ENCODE measurements at regions of chr2 and their contacts with region 1.

Region 1: DNA sequence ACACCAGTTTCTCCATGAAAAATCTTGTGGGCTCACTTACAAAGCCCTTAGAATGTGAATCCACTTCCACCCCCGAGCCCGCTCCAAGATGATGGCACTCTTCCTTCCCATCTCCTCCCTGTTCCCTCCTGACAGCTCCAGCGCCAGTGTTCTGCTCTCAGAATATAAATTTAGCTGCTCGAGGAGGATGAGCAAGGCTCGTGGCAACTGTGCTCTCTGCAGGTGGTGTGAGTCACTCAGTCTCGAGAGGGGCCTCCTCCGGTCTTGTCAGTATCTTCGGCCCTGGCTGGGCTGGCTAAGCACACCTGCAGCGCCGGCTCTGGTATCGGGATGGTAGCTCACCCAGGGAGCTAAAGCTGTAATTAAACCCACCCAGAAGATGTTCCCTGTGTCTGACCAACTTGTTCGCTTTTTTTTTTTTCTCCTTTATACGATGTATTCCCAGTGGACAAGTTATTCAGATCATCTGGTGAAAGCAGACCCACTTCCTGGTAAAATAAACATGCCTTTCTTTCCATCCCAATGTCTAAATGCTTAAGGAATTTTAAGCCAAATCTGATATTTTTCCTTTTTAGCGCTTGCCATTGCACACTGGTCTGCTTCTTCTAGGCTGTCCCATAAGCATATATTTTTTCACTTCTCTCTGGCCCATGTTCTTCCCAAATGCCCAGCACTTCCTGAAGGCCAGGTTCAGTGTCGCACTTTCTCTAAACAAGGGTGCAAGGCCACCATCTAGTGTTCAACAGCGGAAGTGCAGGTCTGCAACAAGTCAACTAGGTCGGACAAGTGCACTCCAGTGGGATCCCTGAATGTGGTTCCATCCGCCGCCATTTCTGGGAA is 31.4 kb upstream of the YPEL5 start:
- DNase-seq: peak; percentile 68
- H3K4me3 ChIP-seq: no peak overlapping the region
- H3K27ac ChIP-seq: no peak overlapping the region
- H3K4me1 ChIP-seq: peaks cover 2% of the 10 kb centered on the region
- H3K27me3 ChIP-seq: peaks cover 0 to 2% of the 10 kb centered on the region in 2 experiments
- CTCF ChIP-seq: peak; percentile 80 to 84
- POLR2A ChIP-seq: no peak

Region 2: GRCh38 chr2:28958689-28959088 is 1156.7 kb before region 1 on chr2:
- CTCF ChIA-PET with region 1: interaction called, 5 read pairs
- POLR2A ChIA-PET with region 1: no interaction called
- dilution Hi-C with region 1: no loop called
- intact Hi-C with region 1: loop called (anchors 1 kb)
- DNase-seq: peak; percentile 66
- H3K4me3 ChIP-seq: no peak overlapping the region
- H3K27ac ChIP-seq: no peak overlapping the region
- H3K4me1 ChIP-seq: peaks cover 7% of the 10 kb centered on the region
- H3K27me3 ChIP-seq: no peaks in the 10 kb centered on the region
- CTCF ChIP-seq: peak; percentile 38 to 58
- POLR2A ChIP-seq: no peak

Region 3: GRCh38 chr2:29923110-29923721 is 192.1 kb before region 1 on chr2:
- CTCF ChIA-PET with region 1: interaction called, 20 read pairs
- POLR2A ChIA-PET with region 1: no interaction called
- dilution Hi-C with region 1: no loop called
- intact Hi-C with region 1: no loop called
- DNase-seq: peak; percentile 33
- H3K4me3 ChIP-seq: no peak overlapping the region
- H3K27ac ChIP-seq: no peak overlapping the region
- H3K4me1 ChIP-seq: no peaks in the 10 kb centered on the region
- H3K27me3 ChIP-seq: peaks cover 20 to 21% of the 10 kb centered on the region in 2 experiments
- CTCF ChIP-seq: peak; percentile 78 to 79
- POLR2A ChIP-seq: no peak

Region 4: DNA sequence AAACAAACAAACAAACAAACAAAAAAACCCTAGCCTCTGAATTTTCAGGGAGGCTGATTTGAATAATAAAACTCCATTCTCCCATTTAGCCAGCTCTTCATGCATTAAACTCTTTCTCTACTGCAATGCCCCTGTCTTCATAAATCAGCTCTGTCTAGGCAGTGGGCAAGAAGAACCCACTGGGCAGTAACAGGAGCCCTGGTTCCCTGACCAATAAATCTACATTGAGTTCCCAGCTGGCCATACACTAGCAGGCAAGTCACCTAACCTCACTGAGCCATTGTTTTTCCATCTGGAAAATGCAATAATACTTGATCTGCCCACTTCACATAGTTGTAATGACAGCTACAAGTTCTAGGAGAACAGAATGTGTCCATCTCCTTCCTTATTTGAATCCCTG is 26.2 kb before region 1 on chr2:
- CTCF ChIA-PET with region 1: interaction called, 78 read pairs
- POLR2A ChIA-PET with region 1: interaction called, 7 read pairs
- dilution Hi-C with region 1: no loop called
- intact Hi-C with region 1: loop called (anchors 1 kb)
- DNase-seq: no peak
- H3K4me3 ChIP-seq: no peak overlapping the region
- H3K27ac ChIP-seq: no peak overlapping the region
- H3K4me1 ChIP-seq: no peaks in the 10 kb centered on the region
- H3K27me3 ChIP-seq: no peaks in the 10 kb centered on the region
- CTCF ChIP-seq: no peak
- POLR2A ChIP-seq: no peak

Region 5: GRCh38 chr2:30098266-30099005 is 16.9 kb before region 1 on chr2:
- CTCF ChIA-PET with region 1: interaction called, 30 read pairs
- POLR2A ChIA-PET with region 1: no interaction called
- dilution Hi-C with region 1: no loop called
- intact Hi-C with region 1: no loop called
- DNase-seq: no peak
- H3K4me3 ChIP-seq: no peak overlapping the region
- H3K27ac ChIP-seq: no peak overlapping the region
- H3K4me1 ChIP-seq: no peaks in the 10 kb centered on the region
- H3K27me3 ChIP-seq: no peaks in the 10 kb centered on the region
- CTCF ChIP-seq: no peak
- POLR2A ChIP-seq: no peak

Measured in endothelial cell of umbilical vein (primary cell).